A549 (cell line): ENCODE measurements at regions of chr2 and their contacts with region 1.

Region 1: GRCh38 chr2:161250864-161251436 is 57.3 kb upstream of the PSMD14 start:
- DNase-seq: peak; percentile 68 to 73
- ATAC-seq: peak; percentile 95 to 96
- H3K4me3 ChIP-seq: no peak overlapping the region
- H3K27ac ChIP-seq: no peak overlapping the region
- H3K4me1 ChIP-seq: 0 out of 3 replicates have a peak, but pooled peaks cover 3% of the 10 kb centered on the region
- CTCF ChIP-seq: peak; percentile 77
- EP300 ChIP-seq: no peak
- POLR2A ChIP-seq: no peak
- RAD21 ChIP-seq: peak; percentile 47 to 63; a peak in 4 of 5 replicates

Region 2: GRCh38 chr2:161238560-161239325 is 12.2 kb before region 1 on chr2:
- CTCF ChIA-PET with region 1: interaction called, 19 read pairs
- POLR2A ChIA-PET with region 1: no interaction called
- DNase-seq: peak; percentile 8 to 50
- ATAC-seq: peak; percentile 82 to 86
- H3K4me3 ChIP-seq: peak overlapping the region; percentile 71
- H3K27ac ChIP-seq: peak overlapping the region; percentile 80 to 88
- H3K4me1 ChIP-seq: peaks cover 21% of the 10 kb centered on the region
- CTCF ChIP-seq: no peak
- EP300 ChIP-seq: no peak
- POLR2A ChIP-seq: no peak
- RAD21 ChIP-seq: no peak

Region 3: GRCh38 chr2:161273038-161273760 is 22.2 kb after region 1 on chr2:
- CTCF ChIA-PET with region 1: interaction called, 17 read pairs
- POLR2A ChIA-PET with region 1: no interaction called
- DNase-seq: peak; percentile 12 to 63
- ATAC-seq: peak; percentile 47 to 83; a peak in 3 of 6 replicates
- H3K4me3 ChIP-seq: no peak overlapping the region
- H3K27ac ChIP-seq: no peak overlapping the region
- H3K4me1 ChIP-seq: no peaks in the 10 kb centered on the region
- CTCF ChIP-seq: peak; percentile 86
- EP300 ChIP-seq: no peak
- POLR2A ChIP-seq: no peak
- RAD21 ChIP-seq: peak; percentile 77 to 79

Region 4: DNA sequence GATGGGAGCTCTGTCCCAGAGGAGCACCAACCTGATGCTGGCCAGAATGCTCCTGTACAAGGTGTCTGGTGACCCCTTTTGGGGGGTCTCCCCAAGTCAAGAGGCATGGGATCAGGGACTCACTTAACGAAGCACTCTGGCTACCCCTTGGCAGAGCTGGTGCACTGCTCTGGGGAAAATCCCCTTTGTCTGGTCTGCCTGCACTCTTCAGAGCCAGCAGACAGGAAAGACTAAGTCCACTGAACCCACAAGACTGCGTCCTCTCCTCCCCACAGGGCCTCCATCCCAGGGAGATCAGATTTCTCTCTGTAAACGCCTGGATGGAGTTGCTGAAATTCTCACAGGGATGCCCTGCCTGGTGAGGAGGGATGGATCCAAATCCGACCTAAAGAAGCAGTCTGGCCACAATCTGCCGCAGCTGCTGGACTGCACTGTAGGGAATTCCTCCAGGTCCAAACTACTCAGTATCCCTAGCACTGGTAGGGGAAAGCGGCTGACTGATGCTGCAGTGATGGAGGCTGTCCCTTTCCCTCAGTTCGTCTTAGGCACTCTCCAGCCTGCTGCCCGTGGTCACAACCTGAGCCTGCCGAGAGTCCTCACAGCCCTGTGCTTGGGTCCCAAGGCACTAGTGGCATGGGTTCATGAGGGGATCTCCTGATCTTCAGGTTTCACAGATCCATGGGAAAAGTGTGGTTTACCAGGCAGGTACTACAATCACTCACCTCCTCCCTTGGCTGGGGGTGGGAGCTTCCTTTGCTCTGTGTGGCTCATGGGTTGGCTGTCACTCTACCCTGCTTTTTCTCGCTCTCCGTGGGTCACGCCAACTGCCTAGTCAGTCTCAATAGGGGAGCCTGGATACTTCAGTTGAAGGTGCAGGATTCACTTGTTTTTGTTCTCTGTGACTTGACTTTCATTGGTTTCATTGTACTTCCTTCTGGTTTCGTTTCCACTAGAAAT is 471.9 kb after region 1 on chr2:
- CTCF ChIA-PET with region 1: no interaction called
- POLR2A ChIA-PET with region 1: no interaction called
- DNase-seq: no peak
- ATAC-seq: no peak
- H3K4me3 ChIP-seq: no peak overlapping the region
- H3K27ac ChIP-seq: no peak overlapping the region
- H3K4me1 ChIP-seq: no peaks in the 10 kb centered on the region
- CTCF ChIP-seq: no peak
- EP300 ChIP-seq: no peak
- POLR2A ChIP-seq: no peak
- RAD21 ChIP-seq: no peak